IMR-90 (cell line): ENCODE measurements at regions of chr17 and their contacts with region 1.

Region 1: DNA sequence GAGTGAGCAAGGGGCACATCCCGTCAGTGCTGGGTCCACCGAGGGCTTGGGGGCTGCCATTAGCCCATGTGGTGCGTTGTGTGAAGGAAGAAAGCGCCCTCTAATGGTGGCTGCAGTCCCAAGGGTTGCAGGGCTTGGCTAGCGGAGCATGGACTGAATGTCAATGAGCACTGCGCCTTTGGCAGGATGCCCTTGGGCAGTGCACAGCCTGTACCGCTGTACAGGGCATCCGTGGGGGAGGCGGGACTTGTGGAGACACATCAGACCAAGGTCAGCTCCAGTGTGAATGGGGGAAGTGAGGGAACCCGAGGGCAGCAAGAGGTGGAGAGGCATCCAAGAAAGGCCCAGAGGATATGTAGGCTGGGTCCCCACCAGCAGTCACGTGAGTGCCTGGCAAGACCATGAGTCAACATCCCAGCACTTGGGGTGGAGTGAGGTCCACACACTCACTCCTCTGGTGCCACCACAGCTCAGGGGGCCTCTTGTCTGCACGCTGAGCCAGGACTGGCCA is 75.5 kb upstream of the MED9 start:
- DNase-seq: no peak
- ATAC-seq: no peak
- H3K4me3 ChIP-seq: no peak overlapping the region
- H3K27ac ChIP-seq: no peak overlapping the region
- H3K4me1 ChIP-seq: peaks cover 11% of the 10 kb centered on the region
- H3K27me3 ChIP-seq: no peaks in the 10 kb centered on the region
- CTCF ChIP-seq: 0 out of 2 replicates have a peak, but pooled peaks have one; percentile 5
- POLR2A ChIP-seq: no peak
- RAD21 ChIP-seq: no peak

Region 2: GRCh38 chr17:17366941-17367875 is 34.1 kb before region 1 on chr17:
- CTCF ChIA-PET with region 1: no interaction called
- POLR2A ChIA-PET with region 1: no interaction called
- dilution Hi-C with region 1: no loop called
- in situ Hi-C with region 1: no loop called
- intact Hi-C with region 1: no loop called
- DNase-seq: no peak
- ATAC-seq: no peak
- H3K4me3 ChIP-seq: no peak overlapping the region
- H3K27ac ChIP-seq: no peak overlapping the region
- H3K4me1 ChIP-seq: peaks cover 2% of the 10 kb centered on the region; the same call in 1 of the 2 replicates
- H3K27me3 ChIP-seq: peaks cover 12% of the 10 kb centered on the region; the same call in 1 of the 2 replicates
- CTCF ChIP-seq: no peak
- POLR2A ChIP-seq: no peak
- RAD21 ChIP-seq: no peak

Region 3: DNA sequence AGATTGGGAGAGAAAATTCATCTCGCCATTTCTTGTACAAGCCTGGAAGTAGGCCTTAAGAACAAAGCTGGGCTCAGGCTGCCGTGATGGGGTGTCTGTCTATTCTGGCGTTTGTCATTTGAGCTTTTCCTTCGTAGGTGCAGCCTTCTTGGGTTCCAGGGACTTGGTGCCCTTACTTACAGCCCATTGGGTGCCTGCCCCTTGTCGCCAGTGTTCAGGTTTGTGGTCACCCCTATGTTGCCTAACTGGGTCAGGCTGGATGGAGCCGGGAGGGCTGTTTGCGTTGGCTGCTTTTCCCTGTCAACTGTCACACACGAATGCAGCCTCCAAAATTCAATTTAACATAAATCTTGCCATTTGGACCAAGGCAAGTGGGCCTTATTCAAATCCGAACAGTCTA is 51.8 kb after region 1 on chr17:
- CTCF ChIA-PET with region 1: no interaction called
- POLR2A ChIA-PET with region 1: no interaction called
- dilution Hi-C with region 1: no loop called
- in situ Hi-C with region 1: loop called (anchors 5 kb)
- intact Hi-C with region 1: no loop called
- DNase-seq: no peak
- ATAC-seq: no peak
- H3K4me3 ChIP-seq: no peak overlapping the region
- H3K27ac ChIP-seq: no peak overlapping the region
- H3K4me1 ChIP-seq: no peaks in the 10 kb centered on the region; the same call in 1 of the 2 replicates
- H3K27me3 ChIP-seq: peaks cover 18% of the 10 kb centered on the region
- CTCF ChIP-seq: no peak
- POLR2A ChIP-seq: no peak
- RAD21 ChIP-seq: no peak

Region 4: GRCh38 chr17:18025945-18026776 is 624.8 kb after region 1 on chr17:
- CTCF ChIA-PET with region 1: no interaction called
- POLR2A ChIA-PET with region 1: no interaction called
- dilution Hi-C with region 1: no loop called
- in situ Hi-C with region 1: no loop called
- intact Hi-C with region 1: no loop called
- DNase-seq: peak; percentile 81
- ATAC-seq: peak; percentile 82
- H3K4me3 ChIP-seq: no peak overlapping the region
- H3K27ac ChIP-seq: no peak overlapping the region
- H3K4me1 ChIP-seq: peaks cover 6% of the 10 kb centered on the region; the same call in 1 of the 2 replicates
- H3K27me3 ChIP-seq: no peaks in the 10 kb centered on the region
- CTCF ChIP-seq: 0 out of 2 replicates have a peak, but pooled peaks have one; percentile 7
- POLR2A ChIP-seq: no peak
- RAD21 ChIP-seq: no peak